ENCODE measurements at regions of chr19 and their contacts with region 1.

Region 1: GRCh38 chr19:34096020-34096915 is 76.0 kb upstream of the LSM14A start:
- DNase-seq: peak; percentile 72
- ATAC-seq: peak; percentile 70
- H3K4me3 ChIP-seq: peak overlapping the region; percentile 40; the same call in 1 of the 2 replicates
- H3K27ac ChIP-seq: no peak overlapping the region
- H3K4me1 ChIP-seq: 0 out of 2 replicates have a peak, but pooled peaks cover 3% of the 10 kb centered on the region
- H3K27me3 ChIP-seq: no peaks in the 10 kb centered on the region
- CTCF ChIP-seq: peak; percentile 78

Region 2: GRCh38 chr19:33778089-33778791 is 318.0 kb before region 1 on chr19:
- CTCF ChIA-PET with region 1: interaction called, 5 read pairs
- POLR2A ChIA-PET with region 1: no interaction called
- intact Hi-C with region 1: loop called (anchors 1 kb)
- DNase-seq: peak; percentile 74
- ATAC-seq: peak; percentile 82
- H3K4me3 ChIP-seq: peak overlapping the region; percentile 51
- H3K27ac ChIP-seq: no peak overlapping the region
- H3K4me1 ChIP-seq: peaks cover 4% of the 10 kb centered on the region; the same call in 1 of the 2 replicates
- H3K27me3 ChIP-seq: no peaks in the 10 kb centered on the region
- CTCF ChIP-seq: peak; percentile 96

Region 3: GRCh38 chr19:33982706-33983105 is 113.6 kb before region 1 on chr19:
- CTCF ChIA-PET with region 1: no interaction called
- POLR2A ChIA-PET with region 1: no interaction called
- intact Hi-C with region 1: no loop called
- DNase-seq: no peak
- ATAC-seq: no peak
- H3K4me3 ChIP-seq: no peak overlapping the region
- H3K27ac ChIP-seq: no peak overlapping the region
- H3K4me1 ChIP-seq: no peaks in the 10 kb centered on the region
- H3K27me3 ChIP-seq: 0 out of 2 replicates have a peak, but pooled peaks cover 11% of the 10 kb centered on the region
- CTCF ChIP-seq: no peak; the same call in 1 of the 2 replicates

Region 4: DNA sequence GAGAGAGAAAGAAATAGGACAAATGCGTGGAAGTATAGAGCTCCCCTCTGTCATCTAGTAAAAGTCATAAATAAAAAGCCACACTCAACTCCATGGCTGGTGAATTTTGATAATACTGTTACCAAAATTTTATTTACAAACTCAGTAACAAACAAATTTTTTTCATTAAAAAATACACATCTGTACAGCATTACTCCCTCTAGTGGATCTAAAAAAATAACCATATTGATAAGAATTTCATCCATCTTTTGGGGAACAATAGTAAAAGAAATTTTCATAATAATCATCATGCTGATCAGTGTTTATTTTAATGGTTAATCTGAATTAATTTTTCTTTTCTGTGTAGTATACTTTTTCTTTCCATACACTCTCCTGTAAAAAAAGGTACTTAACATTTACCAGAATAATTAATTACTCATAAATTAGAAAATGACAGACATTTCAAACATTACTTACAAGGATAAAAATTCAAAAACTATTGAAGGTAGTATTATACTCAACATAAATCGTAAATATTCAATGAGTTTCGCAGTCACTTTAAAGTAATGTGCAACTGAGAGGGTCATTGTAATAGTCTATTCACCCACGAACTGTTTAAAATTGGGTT is 97.4 kb before region 1 on chr19:
- CTCF ChIA-PET with region 1: interaction called, 4 read pairs
- POLR2A ChIA-PET with region 1: no interaction called
- intact Hi-C with region 1: loop called (anchors 5 kb)
- DNase-seq: peak; percentile 47
- ATAC-seq: no peak
- H3K4me3 ChIP-seq: peak overlapping the region; percentile 56
- H3K27ac ChIP-seq: no peak overlapping the region
- H3K4me1 ChIP-seq: no peaks in the 10 kb centered on the region
- H3K27me3 ChIP-seq: peaks cover 11% of the 10 kb centered on the region; the same call in 1 of the 2 replicates
- CTCF ChIP-seq: peak; percentile 61

Region 5: GRCh38 chr19:34017024-34017423 is 79.2 kb before region 1 on chr19:
- CTCF ChIA-PET with region 1: no interaction called
- POLR2A ChIA-PET with region 1: no interaction called
- intact Hi-C with region 1: loop called (anchors 1 kb)
- DNase-seq: peak; percentile 19
- ATAC-seq: 0 out of 2 replicates have a peak, but pooled peaks have one; percentile 38
- H3K4me3 ChIP-seq: no peak overlapping the region
- H3K27ac ChIP-seq: no peak overlapping the region
- H3K4me1 ChIP-seq: no peaks in the 10 kb centered on the region
- H3K27me3 ChIP-seq: peaks cover 16% of the 10 kb centered on the region; the same call in 1 of the 2 replicates
- CTCF ChIP-seq: peak; percentile 33

Region 6: DNA sequence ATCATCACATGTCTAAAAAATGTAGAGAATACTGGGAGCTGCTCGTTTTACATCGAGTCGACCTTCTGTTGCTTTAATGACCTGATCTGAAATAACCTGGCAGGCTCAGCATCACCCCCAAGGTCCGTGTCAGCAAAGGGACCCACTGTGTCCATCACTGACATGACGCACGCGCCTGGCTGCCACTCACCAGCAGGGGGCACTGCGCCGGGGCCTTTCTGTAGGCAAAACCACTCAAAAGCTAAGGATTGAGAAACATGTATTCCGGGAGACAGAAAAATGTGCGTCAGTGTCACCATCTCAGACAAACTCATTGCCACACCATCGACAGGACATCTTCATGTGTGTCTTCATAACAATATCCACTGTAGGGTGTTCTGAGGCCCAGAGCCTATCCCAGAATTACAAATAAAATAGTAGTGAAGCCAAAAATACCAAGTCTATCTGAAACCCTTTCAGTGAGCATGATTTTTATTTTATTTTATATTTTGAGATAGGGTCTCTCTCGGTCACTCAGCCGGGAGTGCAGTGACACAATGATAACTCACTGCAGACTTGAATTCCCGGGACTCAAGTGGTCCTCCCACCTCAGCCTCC is 54.2 kb before region 1 on chr19:
- CTCF ChIA-PET with region 1: interaction called, 15 read pairs
- POLR2A ChIA-PET with region 1: no interaction called
- intact Hi-C with region 1: loop called (anchors 1 kb)
- DNase-seq: peak; percentile 68
- ATAC-seq: peak; percentile 56
- H3K4me3 ChIP-seq: no peak overlapping the region
- H3K27ac ChIP-seq: no peak overlapping the region
- H3K4me1 ChIP-seq: no peaks in the 10 kb centered on the region
- H3K27me3 ChIP-seq: no peaks in the 10 kb centered on the region
- CTCF ChIP-seq: peak; percentile 88

Region 7: DNA sequence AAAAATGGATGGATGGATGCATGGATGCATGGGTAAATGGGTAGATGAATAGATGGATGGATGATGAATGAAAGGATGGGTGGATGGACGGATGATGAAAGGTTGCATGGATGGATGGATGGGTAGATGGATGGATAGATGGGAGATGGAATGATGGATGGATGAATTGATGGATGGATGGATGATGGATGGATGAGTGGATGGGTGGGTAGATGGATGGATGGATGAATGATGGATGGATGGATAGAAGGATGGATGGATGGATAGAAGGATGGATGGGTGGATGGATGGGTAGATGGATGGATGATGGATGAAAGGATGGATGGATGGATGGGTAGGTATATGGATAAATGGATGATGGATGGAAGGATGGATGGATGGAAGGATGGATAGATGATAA is 39.1 kb before region 1 on chr19:
- CTCF ChIA-PET with region 1: no interaction called
- POLR2A ChIA-PET with region 1: no interaction called
- intact Hi-C with region 1: no loop called
- DNase-seq: no peak
- ATAC-seq: no peak
- H3K4me3 ChIP-seq: no peak overlapping the region
- H3K27ac ChIP-seq: no peak overlapping the region
- H3K4me1 ChIP-seq: no peaks in the 10 kb centered on the region
- H3K27me3 ChIP-seq: no peaks in the 10 kb centered on the region
- CTCF ChIP-seq: no peak

Region 8: GRCh38 chr19:34067861-34068271 is 28.4 kb before region 1 on chr19:
- CTCF ChIA-PET with region 1: no interaction called
- POLR2A ChIA-PET with region 1: no interaction called
- intact Hi-C with region 1: loop called (anchors 1 kb)
- DNase-seq: peak; percentile 94
- ATAC-seq: peak; percentile 89
- H3K4me3 ChIP-seq: peak overlapping the region; percentile 45; the same call in 1 of the 2 replicates
- H3K27ac ChIP-seq: peak overlapping the region; percentile 92
- H3K4me1 ChIP-seq: peaks cover 11% of the 10 kb centered on the region
- H3K27me3 ChIP-seq: no peaks in the 10 kb centered on the region
- CTCF ChIP-seq: no peak

Measured in PC-3 (cell line).